Lower leg skin (tissue), 4 donors: ENCODE measurements at regions of chr3 and their contacts with region 1.

Region 1: GRCh38 chr3:141738022-141738890 is at the start of gene RNF7:
- DNase-seq: peak; percentile 93 to 99
- H3K4me3 ChIP-seq: peak within 1 kb of the TSS; percentile 92
- CTCF ChIP-seq: peak in 1 of 3 donors; percentile 84
- POLR2A ChIP-seq: peak in 1 of 2 donors; percentile 6
- total RNA-seq, gene RNF7: 75.6 to 117 (median 84.1) TPM

Region 2: GRCh38 chr3:141875374-141875892 is 137.2 kb after region 1 on chr3:
- intact Hi-C with region 1: loop called (anchors 10 kb)
- DNase-seq: peak; percentile 87 to 98
- H3K4me3 ChIP-seq: peak overlapping the region; percentile 60
- CTCF ChIP-seq: peak in 1 of 3 donors; percentile 33
- POLR2A ChIP-seq: no peak

Region 3: GRCh38 chr3:141913150-141913811 is 175.0 kb after region 1 on chr3:
- intact Hi-C with region 1: loop called (anchors 5 kb)
- DNase-seq: no peak
- H3K4me3 ChIP-seq: no peak overlapping the region
- CTCF ChIP-seq: peak in 1 of 3 donors; percentile 46
- POLR2A ChIP-seq: no peak